ENCODE measurements at regions of chr19 and their contacts with region 1.

Region 1: GRCh38 chr19:40798223-40798996 is 581 bp upstream of the EGLN2 start:
- DNase-seq: peak; percentile 98

Region 2: DNA sequence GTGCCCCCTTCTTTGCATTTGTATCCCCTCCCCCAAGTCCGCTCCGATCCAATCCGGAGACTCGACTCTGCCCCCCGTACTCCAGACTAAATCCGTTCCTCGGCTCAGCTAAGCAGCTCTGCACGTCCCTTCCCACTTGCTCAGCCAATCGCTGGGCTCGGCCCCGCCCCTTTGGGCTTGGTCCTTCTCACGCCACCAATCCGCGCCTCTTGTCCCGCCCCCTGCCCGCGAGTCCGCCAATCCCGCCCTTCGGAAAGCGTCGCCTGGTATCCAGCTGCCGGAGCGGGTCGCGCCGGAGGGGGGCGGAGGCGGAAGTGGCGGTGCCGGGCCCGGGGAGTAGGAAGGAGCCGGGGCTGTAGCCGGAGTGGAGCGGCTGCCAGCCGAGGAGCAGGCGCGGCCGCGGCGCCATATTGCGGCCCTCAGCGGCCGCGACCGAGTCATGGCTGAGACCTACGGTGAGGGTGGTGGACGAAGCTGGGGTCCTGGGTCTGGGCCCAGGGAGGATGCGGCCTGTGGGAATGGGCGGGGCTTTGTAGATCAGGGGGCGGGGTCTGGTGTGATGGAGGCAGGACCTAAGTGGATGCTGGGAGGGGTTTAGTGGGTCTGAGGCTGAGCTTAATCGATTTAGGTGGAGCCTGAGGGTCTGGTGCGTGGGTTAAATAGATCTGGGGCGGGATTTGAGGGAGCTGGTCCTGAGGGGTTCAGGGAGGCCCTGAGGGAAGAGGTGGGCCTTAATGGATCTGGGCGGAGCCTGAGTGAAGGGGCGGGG is 20.3 kb before region 1 on chr19 and contains the start of gene RAB4B:
- CTCF ChIA-PET with region 1: interaction called, 17 read pairs
- POLR2A ChIA-PET with region 1: interaction called, 25 read pairs
- DNase-seq: peak; percentile 95

Region 3: GRCh38 chr19:40872209-40872608 is 73.8 kb after region 1 on chr19:
- CTCF ChIA-PET with region 1: no interaction called
- POLR2A ChIA-PET with region 1: no interaction called
- DNase-seq: no peak